ENCODE measurements at regions of chr6 and their contacts with region 1.

Region 1: DNA sequence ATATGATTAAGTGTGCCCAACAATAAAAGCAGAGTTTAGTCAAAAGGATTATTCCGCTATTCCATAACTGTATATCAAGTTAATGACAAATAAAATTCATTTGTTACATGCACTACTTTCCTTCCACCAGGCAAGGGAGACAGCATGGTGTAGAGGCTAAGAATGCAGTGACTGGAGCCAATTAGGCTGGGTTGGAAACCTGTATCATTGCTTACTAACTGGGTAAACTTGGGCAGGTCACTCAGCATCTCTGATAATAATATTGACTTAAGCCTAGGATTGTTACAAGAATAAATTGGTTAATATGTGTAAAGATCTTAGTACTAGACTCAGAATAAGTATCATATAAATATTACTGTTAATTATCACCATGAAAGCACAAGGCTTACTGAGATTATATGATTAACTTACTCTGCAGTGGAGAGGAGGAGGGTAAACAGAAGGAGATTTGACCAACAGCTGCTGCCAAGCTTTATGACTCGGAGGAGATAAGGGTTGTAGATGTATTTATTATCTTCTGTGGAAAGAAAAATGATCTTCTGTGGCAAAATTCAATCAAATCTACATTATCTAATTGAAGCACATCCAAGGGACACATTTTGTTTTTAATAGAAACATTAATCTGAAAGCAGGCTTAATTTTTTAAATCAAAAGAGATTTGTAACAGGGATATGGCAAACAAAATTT is 1459.9 kb downstream of the GRIK2 start:
- DNase-seq: no peak
- H3K4me3 Mint-ChIP-seq: no peak overlapping the region
- H3K27ac Mint-ChIP-seq: no peak overlapping the region
- H3K4me1 Mint-ChIP-seq: peaks cover 13% of the 10 kb centered on the region
- H3K27me3 Mint-ChIP-seq: no peaks in the 10 kb centered on the region
- CTCF ChIP-seq: no peak

Region 2: DNA sequence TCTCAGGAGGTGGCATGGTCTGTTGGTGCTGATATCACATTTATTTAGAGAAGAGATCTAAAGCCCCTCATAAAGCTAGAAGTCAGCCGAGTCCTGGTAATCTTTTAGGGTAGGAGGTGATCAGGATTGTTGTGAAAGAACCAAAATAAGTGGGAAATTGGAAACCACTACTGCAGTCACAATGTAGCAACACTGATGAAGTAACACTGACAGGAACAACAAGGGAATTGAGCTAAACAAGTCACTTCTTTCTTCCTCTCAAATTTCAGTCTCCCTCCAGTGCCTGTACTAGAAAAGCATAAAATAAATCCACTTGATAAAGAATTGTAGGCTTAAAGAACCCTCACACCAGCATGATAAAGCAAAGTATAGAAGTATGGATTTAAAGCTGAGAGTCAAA is 49.1 kb after region 1 on chr6:
- CTCF ChIA-PET with region 1: no interaction called
- POLR2A ChIA-PET with region 1: no interaction called
- intact Hi-C with region 1: no loop called
- DNase-seq: peak; percentile 27
- H3K4me3 Mint-ChIP-seq: no peak overlapping the region
- H3K27ac Mint-ChIP-seq: no peak overlapping the region
- H3K4me1 Mint-ChIP-seq: no peaks in the 10 kb centered on the region
- H3K27me3 Mint-ChIP-seq: no peaks in the 10 kb centered on the region
- CTCF ChIP-seq: no peak

Region 3: GRCh38 chr6:103122766-103123601 is 269.6 kb after region 1 on chr6:
- CTCF ChIA-PET with region 1: interaction called, 23 read pairs
- POLR2A ChIA-PET with region 1: interaction called, 4 read pairs
- intact Hi-C with region 1: loop called (anchors 1 kb)
- DNase-seq: peak; percentile 76
- H3K4me3 Mint-ChIP-seq: no peak overlapping the region
- H3K27ac Mint-ChIP-seq: no peak overlapping the region
- H3K4me1 Mint-ChIP-seq: peaks cover 12% of the 10 kb centered on the region
- H3K27me3 Mint-ChIP-seq: no peaks in the 10 kb centered on the region
- CTCF ChIP-seq: peak; percentile 75

Region 4: DNA sequence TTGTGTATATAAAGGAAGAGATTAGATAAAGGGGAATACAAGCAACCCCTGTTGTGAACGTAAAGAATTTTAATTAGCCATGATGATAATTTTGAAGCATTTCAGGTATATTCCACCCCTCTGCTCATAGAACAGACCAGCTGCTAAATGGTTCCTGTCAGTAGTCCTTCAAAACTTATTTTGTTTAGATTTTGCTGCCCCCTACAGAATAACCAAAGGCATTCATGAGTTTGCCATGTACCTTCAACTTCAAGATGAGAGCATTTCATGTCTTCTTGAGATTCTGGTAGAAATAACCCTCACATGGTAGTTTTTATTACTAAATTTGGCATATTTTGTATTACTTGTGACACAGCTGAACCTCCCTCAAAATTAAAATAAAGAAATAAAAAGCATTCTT is 419.6 kb after region 1 on chr6:
- CTCF ChIA-PET with region 1: interaction called, 3 read pairs
- POLR2A ChIA-PET with region 1: no interaction called
- intact Hi-C with region 1: loop called (anchors 10 kb)
- DNase-seq: peak; percentile 54
- H3K4me3 Mint-ChIP-seq: no peak overlapping the region
- H3K27ac Mint-ChIP-seq: no peak overlapping the region
- H3K4me1 Mint-ChIP-seq: no peaks in the 10 kb centered on the region
- H3K27me3 Mint-ChIP-seq: no peaks in the 10 kb centered on the region
- CTCF ChIP-seq: peak; percentile 49

Measured in MCF 10A (cell line).